ENCODE measurements at regions of chr5 and their contacts with region 1.

Region 1: GRCh38 chr5:131322926-131323325 is 59.1 kb downstream of the CDC42SE2 start:
- DNase-seq: no peak
- ATAC-seq: no peak
- H3K4me3 Mint-ChIP-seq: no peak overlapping the region
- H3K27ac Mint-ChIP-seq: peak overlapping the region; percentile 84
- H3K4me1 Mint-ChIP-seq: peaks cover 65% of the 10 kb centered on the region
- H3K27me3 Mint-ChIP-seq: no peaks in the 10 kb centered on the region

Region 2: DNA sequence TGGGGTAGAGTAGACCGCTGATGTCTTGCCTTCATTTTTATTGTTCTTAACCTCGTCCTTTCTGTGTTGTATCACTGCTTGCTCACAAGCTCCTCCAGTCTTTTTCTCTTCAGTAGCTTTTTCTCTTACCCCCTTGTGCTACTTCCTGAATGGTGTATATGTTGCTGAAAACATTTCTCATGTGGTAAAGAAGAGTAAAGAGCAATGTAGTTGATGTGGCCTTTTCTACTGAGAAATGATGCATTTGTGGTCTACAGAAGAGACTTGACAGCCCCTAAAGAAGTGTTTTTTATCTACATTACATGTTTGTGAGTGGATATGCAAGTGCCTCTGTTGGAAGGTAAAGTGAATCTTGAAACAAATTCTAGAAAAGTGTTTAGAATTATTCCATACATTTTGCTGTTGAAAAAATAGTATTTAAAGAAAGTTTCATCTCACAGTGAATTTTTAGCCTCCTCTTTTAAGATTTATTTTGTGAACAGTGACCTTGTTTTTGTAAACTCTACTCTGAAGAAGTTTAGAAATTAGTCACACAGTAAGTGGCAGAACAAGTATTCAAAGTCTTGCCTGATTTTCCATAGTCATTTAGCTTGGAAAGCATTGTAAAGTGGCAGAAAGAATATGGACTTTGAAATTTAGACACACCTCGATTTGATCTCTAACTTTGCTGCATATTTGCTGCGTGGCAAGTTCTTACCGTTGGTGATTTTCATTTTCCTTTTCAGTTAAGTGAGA is 41.6 kb before region 1 on chr5:
- CTCF ChIA-PET with region 1: no interaction called
- POLR2A ChIA-PET with region 1: interaction called, 4 read pairs
- intact Hi-C with region 1: loop called in 1 of 2 experiments (anchors 2 kb)
- DNase-seq: no peak
- ATAC-seq: peak; percentile 78
- H3K4me3 Mint-ChIP-seq: peak overlapping the region; percentile 74
- H3K27ac Mint-ChIP-seq: peak overlapping the region; percentile 95
- H3K4me1 Mint-ChIP-seq: peaks cover 90% of the 10 kb centered on the region
- H3K27me3 Mint-ChIP-seq: no peaks in the 10 kb centered on the region

Region 3: DNA sequence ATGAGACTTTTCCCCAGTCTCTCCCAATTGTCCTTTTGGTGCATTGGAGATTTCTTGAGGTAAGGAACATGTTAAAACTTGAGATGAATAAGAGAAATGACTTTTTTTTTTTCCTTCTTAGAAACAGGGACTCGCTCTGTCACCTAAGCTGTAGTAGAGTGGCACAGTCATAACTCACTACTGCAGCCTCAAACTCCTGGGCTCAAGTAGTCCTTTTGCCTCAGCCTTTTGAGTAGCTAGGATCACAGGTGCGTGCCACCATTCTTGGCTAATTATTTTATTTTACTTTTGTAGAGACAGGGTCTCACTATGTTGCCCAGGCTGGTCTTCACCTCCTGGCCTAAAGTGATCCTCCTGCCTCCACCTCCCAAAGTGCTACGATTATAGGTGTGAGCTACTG is 33.2 kb before region 1 on chr5:
- CTCF ChIA-PET with region 1: interaction called, 3 read pairs
- POLR2A ChIA-PET with region 1: interaction called, 4 read pairs
- intact Hi-C with region 1: loop called in 1 of 2 experiments (anchors 2 kb)
- DNase-seq: peak; percentile 61
- ATAC-seq: peak; percentile 80
- H3K4me3 Mint-ChIP-seq: peak overlapping the region; percentile 64
- H3K27ac Mint-ChIP-seq: peak overlapping the region; percentile 98
- H3K4me1 Mint-ChIP-seq: peaks cover 72% of the 10 kb centered on the region
- H3K27me3 Mint-ChIP-seq: no peaks in the 10 kb centered on the region

Region 4: DNA sequence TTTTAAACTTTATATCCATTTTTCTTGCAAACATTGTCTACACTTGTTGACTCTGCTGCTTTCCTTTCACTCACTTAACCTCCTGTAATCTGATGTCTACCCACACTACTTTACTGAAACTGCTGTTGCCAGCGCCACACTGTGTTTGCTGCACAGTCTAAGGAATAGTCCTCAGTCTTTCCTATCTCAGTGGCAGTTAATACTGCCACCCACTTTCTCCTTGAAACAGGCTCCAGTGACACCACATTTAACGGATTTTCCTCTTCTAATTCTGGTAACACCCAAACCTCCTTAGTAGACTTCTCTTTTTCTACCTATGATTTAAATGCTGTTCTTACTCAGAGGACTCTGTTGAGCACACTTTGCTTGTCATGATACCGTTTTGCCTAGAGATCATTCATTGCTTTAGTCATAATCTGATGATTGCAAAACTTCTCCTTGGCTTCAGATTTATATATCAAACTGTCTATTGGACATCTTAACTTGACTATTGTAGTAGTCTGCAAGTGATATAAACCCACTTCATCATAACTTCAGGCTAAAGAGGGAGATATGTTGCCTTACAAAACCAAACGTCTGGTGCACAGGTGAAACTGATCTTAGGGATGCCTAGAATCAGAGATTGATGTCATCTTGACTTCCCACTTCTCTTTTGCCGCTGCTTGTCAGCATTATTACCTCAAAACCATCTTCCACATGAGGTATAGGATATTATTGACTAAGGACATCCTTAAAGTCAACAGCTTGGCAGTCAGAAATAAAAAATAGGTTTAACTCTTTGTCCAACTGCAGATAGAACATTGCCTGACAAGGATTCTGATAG is 35.0 kb after region 1 on chr5:
- CTCF ChIA-PET with region 1: no interaction called
- POLR2A ChIA-PET with region 1: no interaction called
- intact Hi-C with region 1: loop called in 1 of 2 experiments (anchors 2 kb)
- DNase-seq: peak; percentile 66
- ATAC-seq: peak; percentile 91
- H3K4me3 Mint-ChIP-seq: peak overlapping the region; percentile 59
- H3K27ac Mint-ChIP-seq: peak overlapping the region; percentile 94
- H3K4me1 Mint-ChIP-seq: peaks cover 69% of the 10 kb centered on the region
- H3K27me3 Mint-ChIP-seq: no peaks in the 10 kb centered on the region